Cardiac septum (tissue), 1 donor: ENCODE measurements at regions of chr12 and their contacts with region 1.

Region 1: DNA sequence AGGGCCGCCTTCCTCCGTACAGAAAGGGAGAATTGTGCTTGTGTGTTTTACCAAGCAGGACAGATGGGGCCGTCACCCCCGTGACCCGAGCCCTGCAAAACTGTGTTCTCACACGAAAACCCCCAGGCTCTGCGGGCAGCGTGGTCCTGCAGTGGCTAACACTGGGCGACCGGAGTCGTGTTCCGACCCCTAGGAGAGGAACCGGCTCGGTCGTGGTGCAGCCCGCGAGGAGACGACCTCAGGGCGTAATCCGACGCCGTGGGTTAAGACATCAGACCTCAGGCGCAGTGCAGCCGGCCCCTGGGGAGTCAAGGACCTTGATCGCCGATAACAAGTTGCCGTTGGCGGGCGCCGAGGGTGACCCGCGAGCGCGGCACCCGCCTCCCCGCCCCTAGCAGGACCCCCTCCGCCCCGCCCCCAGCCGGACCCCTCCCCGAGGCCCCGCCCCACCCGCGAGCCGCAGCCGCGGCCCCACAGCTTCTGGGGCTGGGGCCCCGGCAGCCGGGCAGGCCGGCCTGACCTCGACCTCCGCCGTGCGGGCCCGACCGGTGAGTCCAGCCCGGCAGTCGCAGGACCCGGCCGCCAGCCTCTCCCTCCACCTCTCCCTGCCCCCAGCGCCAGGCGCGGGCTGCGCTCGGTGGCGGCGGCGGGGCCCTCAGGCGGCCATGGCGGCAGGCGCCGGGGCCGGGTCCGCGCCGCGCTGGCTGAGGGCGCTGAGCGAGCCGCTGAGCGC is at the start of gene CHPT1:
- DNase-seq: peak; percentile 88
- total RNA-seq, gene CHPT1: 86.1 TPM

Region 2: GRCh38 chr12:101407436-101408345 is 289.7 kb before region 1 on chr12 and contains the start of gene ARL1:
- intact Hi-C with region 1: loop called (anchors 5 kb)
- DNase-seq: peak; percentile 94
- total RNA-seq, gene ARL1: 92.6 TPM

Region 3: GRCh38 chr12:101648195-101648594 is 49.2 kb before region 1 on chr12:
- intact Hi-C with region 1: no loop called
- DNase-seq: no peak

Region 4: DNA sequence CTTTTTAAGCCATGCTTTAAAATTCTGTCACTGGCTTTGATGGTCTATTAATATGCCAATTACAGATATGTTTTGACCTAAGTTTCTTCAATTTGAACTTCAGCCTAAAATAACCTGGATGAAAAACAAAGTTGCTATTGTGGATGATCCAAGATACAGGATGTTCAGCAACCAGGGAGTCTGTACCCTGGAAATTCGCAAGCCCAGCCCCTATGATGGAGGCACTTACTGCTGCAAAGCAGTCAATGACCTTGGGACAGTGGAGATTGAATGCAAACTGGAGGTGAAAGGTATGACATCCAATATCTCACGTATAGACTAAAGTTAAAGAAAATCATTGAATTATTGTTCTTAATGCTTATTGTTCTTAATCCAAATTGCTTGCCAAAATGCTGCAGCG is 17.1 kb before region 1 on chr12:
- intact Hi-C with region 1: no loop called
- DNase-seq: no peak

Region 5: DNA sequence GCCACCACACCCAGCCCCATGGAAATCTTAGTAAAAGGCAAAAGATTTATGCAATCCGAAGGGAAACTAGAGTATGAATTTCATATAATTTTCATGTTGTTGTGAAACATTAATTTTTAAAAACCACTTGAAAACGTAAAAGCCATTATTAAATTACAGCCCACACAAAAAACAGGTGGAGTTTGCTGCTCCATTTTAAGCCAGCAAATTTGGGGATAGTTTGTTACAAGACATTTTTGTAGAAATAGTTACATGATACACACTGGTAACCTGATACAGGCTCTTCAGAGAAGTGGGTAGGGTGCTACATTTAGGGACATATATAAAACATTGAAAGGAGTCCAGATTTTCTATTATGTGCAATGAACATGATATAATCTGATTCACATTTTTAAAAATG is 115.8 kb after region 1 on chr12:
- intact Hi-C with region 1: no loop called
- DNase-seq: no peak